AG04450 (cell line): ENCODE measurements at regions of chr1 and their contacts with region 1.

Region 1: GRCh38 chr1:47725992-47726855 is 271.0 kb downstream of the TRABD2B start:
- DNase-seq: peak; percentile 26
- H3K4me3 ChIP-seq: peak overlapping the region; percentile 25; the same call in 1 of the 2 replicates
- H3K27ac ChIP-seq: no peak overlapping the region
- H3K27me3 ChIP-seq: peaks cover 24% of the 10 kb centered on the region
- CTCF ChIP-seq: peak; percentile 89

Region 2: DNA sequence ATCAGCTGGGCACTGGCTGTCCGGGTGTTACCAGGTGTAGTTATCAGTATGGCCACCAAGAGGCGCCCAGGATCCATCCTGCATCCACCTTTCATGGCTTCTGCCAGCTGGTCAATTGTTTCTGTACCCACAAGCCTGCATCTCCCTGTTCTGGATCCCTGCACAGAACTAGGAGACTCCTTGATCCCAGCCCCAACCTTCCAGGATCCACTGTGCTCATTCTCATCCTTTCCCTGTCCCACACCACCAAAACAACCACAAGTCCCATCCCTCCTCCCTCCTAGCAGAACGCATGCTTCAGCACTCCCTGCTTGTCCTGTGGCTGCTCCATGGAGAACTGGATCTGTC is 337.4 kb before region 1 on chr1:
- CTCF ChIA-PET with region 1: interaction called, 87 read pairs
- POLR2A ChIA-PET with region 1: no interaction called
- DNase-seq: no peak
- H3K4me3 ChIP-seq: no peak overlapping the region
- H3K27ac ChIP-seq: no peak overlapping the region
- H3K27me3 ChIP-seq: no peaks in the 10 kb centered on the region
- CTCF ChIP-seq: peak; percentile 92

Region 3: GRCh38 chr1:47416319-47417169 is 309.7 kb before region 1 on chr1:
- CTCF ChIA-PET with region 1: interaction called, 12 read pairs
- POLR2A ChIA-PET with region 1: no interaction called
- DNase-seq: no peak
- H3K4me3 ChIP-seq: peak overlapping the region; percentile 45
- H3K27ac ChIP-seq: no peak overlapping the region
- H3K27me3 ChIP-seq: peaks cover 43% of the 10 kb centered on the region
- CTCF ChIP-seq: no peak

Region 4: GRCh38 chr1:47527658-47528255 is 198.5 kb before region 1 on chr1:
- CTCF ChIA-PET with region 1: interaction called, 27 read pairs
- POLR2A ChIA-PET with region 1: no interaction called
- DNase-seq: no peak
- H3K4me3 ChIP-seq: no peak overlapping the region
- H3K27ac ChIP-seq: no peak overlapping the region
- H3K27me3 ChIP-seq: peaks cover 9% of the 10 kb centered on the region
- CTCF ChIP-seq: no peak; the same call in none of the 2 replicates

Region 5: GRCh38 chr1:47554901-47555300 is 171.3 kb before region 1 on chr1:
- CTCF ChIA-PET with region 1: no interaction called
- POLR2A ChIA-PET with region 1: no interaction called
- DNase-seq: no peak
- H3K4me3 ChIP-seq: no peak overlapping the region
- H3K27ac ChIP-seq: no peak overlapping the region
- H3K27me3 ChIP-seq: peaks cover 34% of the 10 kb centered on the region
- CTCF ChIP-seq: no peak

Region 6: DNA sequence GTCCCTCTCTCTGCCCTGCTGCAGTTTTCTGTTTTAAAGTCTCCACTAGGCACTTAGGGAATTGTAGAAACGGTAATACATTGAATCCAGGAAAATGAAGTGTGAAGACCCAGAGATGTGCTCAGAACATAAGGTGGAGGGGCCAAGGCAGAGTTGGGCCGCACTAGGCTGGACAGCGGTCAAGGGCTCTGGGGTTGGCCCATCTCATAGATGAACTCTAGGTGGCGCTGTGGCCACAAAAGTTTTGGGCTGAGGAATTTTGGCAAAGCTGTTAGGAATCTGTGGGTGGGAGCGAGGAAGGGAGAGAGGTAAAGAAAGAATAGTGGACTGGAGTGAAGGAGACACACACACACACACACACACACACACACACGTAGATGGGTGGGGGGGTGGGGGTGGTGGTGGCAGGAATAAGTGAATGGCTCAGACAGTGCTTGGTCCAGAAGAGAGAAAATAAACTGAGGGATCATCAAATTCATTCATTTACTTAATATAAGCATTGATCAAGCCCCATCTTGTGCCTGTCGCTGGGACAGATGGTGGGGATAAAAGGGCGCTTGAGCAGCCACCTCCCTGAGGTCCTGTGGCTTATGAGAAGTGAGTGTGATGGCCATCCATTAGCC is 12.4 kb after region 1 on chr1:
- CTCF ChIA-PET with region 1: interaction called, 30 read pairs
- POLR2A ChIA-PET with region 1: no interaction called
- DNase-seq: no peak
- H3K4me3 ChIP-seq: no peak overlapping the region
- H3K27ac ChIP-seq: no peak overlapping the region
- H3K27me3 ChIP-seq: no peaks in the 10 kb centered on the region
- CTCF ChIP-seq: peak; percentile 72